Aorta (tissue), 5 donors: ENCODE measurements at regions of chr11 and their contacts with region 1.

Region 1: DNA sequence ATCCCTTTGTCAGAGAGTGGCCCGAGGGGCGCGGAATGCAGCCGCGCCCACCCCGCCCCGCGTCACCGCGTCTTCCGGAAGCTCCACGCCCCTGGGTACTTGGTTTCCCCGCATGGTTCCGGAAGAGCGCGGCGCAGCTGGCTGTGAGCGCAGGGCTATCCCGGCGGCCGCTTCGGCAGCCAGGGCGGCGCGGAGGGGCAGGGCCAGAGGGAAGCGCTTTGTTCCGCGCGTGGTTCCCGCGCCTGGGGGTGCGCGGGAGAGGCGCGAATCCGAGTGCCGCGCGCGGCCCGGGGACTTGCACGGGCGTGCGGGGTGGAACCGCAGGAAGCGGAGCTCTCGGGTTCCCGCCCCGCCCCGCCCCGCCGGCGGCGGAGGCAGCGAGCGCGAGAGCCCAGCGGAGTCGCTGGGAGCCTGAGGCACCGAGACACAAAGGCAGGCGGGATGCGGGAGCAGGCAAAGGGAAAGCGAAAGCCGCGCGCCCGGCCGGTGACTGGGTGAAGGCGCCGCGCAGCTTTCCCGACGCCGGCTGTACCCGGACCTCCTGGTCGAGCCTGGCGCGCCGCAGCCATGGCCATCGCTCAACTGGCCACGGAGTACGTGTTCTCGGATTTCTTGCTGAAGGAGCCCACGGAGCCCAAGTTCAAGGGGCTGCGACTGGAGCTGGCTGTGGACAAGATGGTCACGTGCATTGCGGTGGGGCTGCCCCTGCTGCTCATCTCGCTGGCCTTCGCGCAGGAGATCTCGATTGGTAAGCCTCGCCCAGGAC is at the start of gene PANX1:
- DNase-seq: peak; percentile 87 to 95
- ATAC-seq: peak; percentile 88
- H3K4me3 ChIP-seq: peak within 1 kb of the TSS; percentile 82 to 85
- H3K27ac ChIP-seq: peak within 1 kb of the TSS; percentile 94 to 97
- H3K4me1 ChIP-seq: peaks cover 6 to 10% of the 10 kb centered on the region in 2 donors
- H3K27me3 ChIP-seq: no peaks in the 10 kb centered on the region
- total RNA-seq, gene PANX1: 25.5 to 29.3 TPM

Region 2: DNA sequence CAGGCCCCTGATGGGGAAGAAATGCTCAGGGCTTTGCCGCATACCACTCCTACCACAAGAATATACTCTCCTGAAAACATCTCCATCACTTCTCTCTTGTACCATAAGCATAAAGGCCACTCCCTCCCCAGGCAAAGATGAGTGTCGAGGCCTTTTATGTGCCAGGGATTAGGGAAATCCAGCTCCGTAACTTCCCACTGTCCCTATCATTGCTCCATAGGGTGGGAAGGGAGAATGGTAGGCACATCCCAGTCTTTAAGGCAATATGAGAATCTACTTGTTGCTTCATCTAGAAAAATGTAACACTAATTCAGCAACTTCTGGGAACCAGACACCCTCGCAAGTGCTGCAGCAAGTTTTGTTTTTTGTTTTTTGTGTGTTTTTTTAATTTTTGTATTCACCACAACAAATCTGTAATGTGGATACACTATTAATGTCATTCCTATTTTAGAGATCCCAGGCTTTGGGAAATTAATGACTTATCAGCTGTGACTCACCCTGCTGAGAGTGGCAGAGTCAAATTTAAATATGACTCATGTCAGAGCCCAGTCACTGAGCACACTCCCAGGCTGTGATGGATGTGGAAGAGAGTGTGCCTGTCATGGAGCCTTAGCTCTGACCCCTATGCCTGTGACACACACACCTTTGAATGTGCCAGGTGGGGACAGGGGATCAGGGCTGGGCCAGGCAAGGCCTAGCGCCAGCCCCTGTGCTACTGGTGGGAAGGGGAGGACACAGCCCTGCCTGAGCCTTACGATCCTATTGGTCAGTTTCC is 23.2 kb after region 1 on chr11:
- intact Hi-C with region 1: loop called in 1 of 2 experiments (anchors 2 kb)
- DNase-seq: peak in 1 of 2 donors; percentile 65
- ATAC-seq: peak; percentile 90
- H3K4me3 ChIP-seq: no peak overlapping the region
- H3K27ac ChIP-seq: peak overlapping the region in 1 of 2 donors; percentile 82
- H3K4me1 ChIP-seq: peaks cover 5 to 18% of the 10 kb centered on the region in 2 donors
- H3K27me3 ChIP-seq: no peaks in the 10 kb centered on the region